ENCODE measurements at regions of chr3 and their contacts with region 1.

Region 1: GRCh38 chr3:141311496-141312353 is 56.6 kb upstream of the ZBTB38 start:
- DNase-seq: peak; percentile 100
- H3K4me3 ChIP-seq: peak overlapping the region; percentile 53 to 74 (median 58)
- H3K27ac ChIP-seq: peak overlapping the region; percentile 69 to 89 (median 80)
- H3K4me1 ChIP-seq: peaks cover 6 to 15% (median 10%) of the 10 kb centered on the region in 4 donors
- H3K27me3 ChIP-seq: no peaks in the 10 kb centered on the region
- CTCF ChIP-seq: peak; percentile 55 to 97 (median 77)
- EP300 ChIP-seq: no peak
- POLR2A ChIP-seq: peak; percentile 69

Region 2: GRCh38 chr3:141266797-141267555 is 44.7 kb before region 1 on chr3:
- in situ Hi-C with region 1: no loop called
- intact Hi-C with region 1: no loop called
- DNase-seq: no peak
- H3K4me3 ChIP-seq: peak overlapping the region in 1 of 4 donors; percentile 32
- H3K27ac ChIP-seq: peak overlapping the region in 1 of 4 donors; percentile 43
- H3K4me1 ChIP-seq: no peaks in the 10 kb centered on the region
- H3K27me3 ChIP-seq: no peaks in the 10 kb centered on the region
- CTCF ChIP-seq: no peak
- EP300 ChIP-seq: no peak
- POLR2A ChIP-seq: peak; percentile 28

Region 3: DNA sequence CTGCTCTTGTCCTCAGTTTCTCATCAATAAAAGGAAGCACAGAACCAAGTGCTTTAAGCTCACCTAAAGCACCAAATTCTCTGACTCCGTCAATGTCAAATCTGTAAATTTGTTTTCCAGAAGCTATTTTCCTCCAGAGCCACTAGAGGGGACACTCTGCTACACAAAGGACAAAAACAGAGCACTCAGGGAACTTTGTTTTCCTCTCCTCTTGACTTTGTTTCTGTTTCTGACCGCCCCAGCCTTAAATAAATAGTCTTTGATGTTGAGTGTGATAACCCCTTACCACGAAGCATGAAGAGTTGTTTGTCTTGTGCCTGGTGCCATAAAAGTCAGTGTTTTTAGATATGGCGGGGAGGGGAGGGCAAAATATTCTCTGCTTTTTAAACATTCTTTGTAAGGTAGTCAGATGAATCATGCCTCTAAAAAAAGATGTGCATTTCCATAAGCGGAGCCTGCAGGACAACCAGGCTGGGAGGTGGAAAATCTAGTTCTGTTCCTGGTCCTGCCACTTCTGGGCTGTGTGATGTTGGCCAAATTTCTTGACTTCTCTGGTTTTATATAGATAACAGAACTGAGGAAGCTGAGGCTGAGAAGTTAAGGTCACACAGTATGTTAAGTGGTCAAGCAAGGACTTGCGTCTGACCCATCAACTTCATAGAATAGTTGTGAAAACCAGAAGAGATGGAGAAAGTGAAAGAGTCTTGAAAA is 49.3 kb after region 1 on chr3:
- in situ Hi-C with region 1: no loop called
- intact Hi-C with region 1: loop called (anchors 5 kb)
- DNase-seq: no peak
- H3K4me3 ChIP-seq: peak overlapping the region in 1 of 4 donors; percentile 25
- H3K27ac ChIP-seq: peak overlapping the region; percentile 46 to 71 (median 68)
- H3K4me1 ChIP-seq: peaks cover 3 to 27% (median 12%) of the 10 kb centered on the region in 4 donors
- H3K27me3 ChIP-seq: no peaks in the 10 kb centered on the region
- CTCF ChIP-seq: peak; percentile 64 to 90 (median 72)
- EP300 ChIP-seq: no peak
- POLR2A ChIP-seq: no peak

Measured in transverse colon (tissue), 4 donors.